Heart left ventricle (tissue), 16 donors: ENCODE measurements at regions of chr15 and their contacts with region 1.

Region 1: GRCh38 chr15:90818251-90819210 is 49.9 kb upstream of the FURIN start:
- DNase-seq: peak in 2 of 5 donors; percentile 65 to 75
- ATAC-seq: peak in 3 of 4 donors; percentile 21 to 38 (median 36)
- H3K4me3 ChIP-seq: no peak overlapping the region
- H3K27ac ChIP-seq: peak overlapping the region in 3 of 12 donors; percentile 38 to 66 (median 55)
- H3K4me1 ChIP-seq: peaks cover 0 to 37% (median 11%) of the 10 kb centered on the region in 12 donors
- H3K27me3 ChIP-seq: no peaks in the 10 kb centered on the region
- CTCF ChIP-seq: peak in 3 of 12 donors; percentile 12 to 24 (median 23)
- POLR2A ChIP-seq: no peak

Region 2: GRCh38 chr15:90603893-90604292 is 214.6 kb before region 1 on chr15:
- intact Hi-C with region 1: no loop called
- DNase-seq: peak in 2 of 5 donors; percentile 37 to 67
- ATAC-seq: peak in 2 of 4 donors; percentile 36 to 49
- H3K4me3 ChIP-seq: no peak overlapping the region
- H3K27ac ChIP-seq: no peak overlapping the region
- H3K4me1 ChIP-seq: peaks cover 0 to 10% (median 5%) of the 10 kb centered on the region in 12 donors
- H3K27me3 ChIP-seq: no peaks in the 10 kb centered on the region
- CTCF ChIP-seq: peak in 10 of 12 donors; percentile 18 to 56 (median 42)
- POLR2A ChIP-seq: no peak

Region 3: DNA sequence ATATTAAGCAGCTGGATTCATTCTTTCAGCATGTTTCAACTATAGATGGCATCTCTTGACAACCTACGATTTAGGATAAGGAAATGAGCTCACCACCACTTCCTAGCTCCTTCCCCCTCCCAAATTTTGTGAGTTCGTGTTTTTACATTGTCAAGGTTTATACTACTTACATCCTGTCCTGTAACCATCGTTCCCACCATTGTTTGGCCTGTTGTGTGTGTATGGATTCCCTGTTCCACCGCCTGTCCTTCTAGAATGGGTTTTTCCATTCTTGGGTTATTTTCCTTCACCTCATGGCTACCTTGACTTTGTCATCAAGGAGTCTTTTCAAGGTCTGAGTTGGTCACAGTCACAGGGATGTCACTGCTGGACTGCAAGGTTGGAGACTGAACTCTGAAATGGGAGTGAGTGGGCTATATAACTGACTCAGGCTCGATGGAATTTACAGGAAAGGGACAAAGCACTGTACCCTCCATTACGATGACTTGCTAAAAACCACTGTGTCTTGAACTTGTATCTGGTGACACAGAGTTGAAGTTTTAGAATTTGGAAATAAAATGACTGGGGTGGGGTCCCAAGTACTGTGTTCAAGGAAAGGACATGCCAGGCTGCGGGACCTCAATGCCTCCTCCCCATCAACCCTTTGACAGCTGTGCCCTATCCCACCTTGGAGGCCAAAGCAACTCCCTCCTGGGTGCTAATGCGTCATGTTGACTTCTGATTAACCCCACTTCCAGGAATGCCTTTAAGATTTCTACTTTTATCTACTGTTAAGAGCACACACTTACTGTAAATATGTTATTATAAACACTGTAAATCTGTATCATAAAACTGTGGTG is 168.2 kb before region 1 on chr15:
- intact Hi-C with region 1: no loop called
- DNase-seq: no peak
- ATAC-seq: peak in 1 of 4 donors; percentile 43
- H3K4me3 ChIP-seq: no peak overlapping the region
- H3K27ac ChIP-seq: peak overlapping the region in 8 of 12 donors; percentile 11 to 80 (median 62)
- H3K4me1 ChIP-seq: peaks cover 0 to 44% (median 15%) of the 10 kb centered on the region in 12 donors
- H3K27me3 ChIP-seq: no peaks in the 10 kb centered on the region
- CTCF ChIP-seq: no peak
- POLR2A ChIP-seq: no peak

Region 4: DNA sequence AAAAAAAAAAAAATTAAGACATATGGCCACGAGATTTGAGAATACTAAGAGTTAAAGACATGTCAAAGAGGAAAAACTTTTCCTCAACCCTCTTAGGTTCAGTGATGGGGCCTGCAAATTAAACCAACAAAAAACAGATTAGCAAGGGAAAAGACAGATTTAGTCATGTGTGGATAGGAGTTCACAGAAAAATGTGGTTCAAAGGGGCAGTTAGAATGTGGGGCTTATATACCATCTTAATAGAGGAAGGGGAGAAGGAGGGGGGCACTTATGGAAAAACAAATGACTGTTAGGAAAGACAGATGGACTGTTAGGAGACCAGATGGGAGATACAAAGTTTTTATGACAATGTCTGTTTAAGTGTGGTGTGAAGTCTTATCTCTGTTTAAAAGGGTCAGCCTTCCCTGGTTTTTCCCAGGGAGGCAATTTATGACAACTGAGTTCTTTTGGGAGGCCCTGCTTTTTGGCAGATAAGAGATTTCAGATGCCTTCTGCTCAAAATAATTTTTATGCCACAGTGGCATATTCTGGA is 18.8 kb before region 1 on chr15:
- intact Hi-C with region 1: loop called in 1 of 10 experiments (anchors 2 kb)
- DNase-seq: no peak
- ATAC-seq: no peak
- H3K4me3 ChIP-seq: no peak overlapping the region
- H3K27ac ChIP-seq: no peak overlapping the region
- H3K4me1 ChIP-seq: no peaks in the 10 kb centered on the region
- H3K27me3 ChIP-seq: no peaks in the 10 kb centered on the region
- CTCF ChIP-seq: no peak
- POLR2A ChIP-seq: no peak

Region 5: GRCh38 chr15:90862964-90863778 is 44.6 kb after region 1 on chr15:
- intact Hi-C with region 1: loop called in 1 of 10 experiments (anchors 5 kb)
- DNase-seq: no peak
- ATAC-seq: peak in 3 of 4 donors; percentile 42 to 71 (median 54)
- H3K4me3 ChIP-seq: no peak overlapping the region
- H3K27ac ChIP-seq: peak overlapping the region in 5 of 12 donors; percentile 1 to 65 (median 30)
- H3K4me1 ChIP-seq: peaks cover 0 to 42% (median 6%) of the 10 kb centered on the region in 12 donors
- H3K27me3 ChIP-seq: no peaks in the 10 kb centered on the region
- CTCF ChIP-seq: no peak
- POLR2A ChIP-seq: no peak